ENCODE measurements at regions of chr3 and their contacts with region 1.

Region 1: GRCh38 chr3:119463171-119464169 is at the start of gene TMEM39A:
- DNase-seq: peak; percentile 97 to 100 (median 99)

Region 2: GRCh38 chr3:118973050-118973449 is 490.4 kb before region 1 on chr3:
- intact Hi-C with region 1: no loop called
- DNase-seq: peak in 41 of 42 donors; percentile 43 to 87 (median 69)

Region 3: DNA sequence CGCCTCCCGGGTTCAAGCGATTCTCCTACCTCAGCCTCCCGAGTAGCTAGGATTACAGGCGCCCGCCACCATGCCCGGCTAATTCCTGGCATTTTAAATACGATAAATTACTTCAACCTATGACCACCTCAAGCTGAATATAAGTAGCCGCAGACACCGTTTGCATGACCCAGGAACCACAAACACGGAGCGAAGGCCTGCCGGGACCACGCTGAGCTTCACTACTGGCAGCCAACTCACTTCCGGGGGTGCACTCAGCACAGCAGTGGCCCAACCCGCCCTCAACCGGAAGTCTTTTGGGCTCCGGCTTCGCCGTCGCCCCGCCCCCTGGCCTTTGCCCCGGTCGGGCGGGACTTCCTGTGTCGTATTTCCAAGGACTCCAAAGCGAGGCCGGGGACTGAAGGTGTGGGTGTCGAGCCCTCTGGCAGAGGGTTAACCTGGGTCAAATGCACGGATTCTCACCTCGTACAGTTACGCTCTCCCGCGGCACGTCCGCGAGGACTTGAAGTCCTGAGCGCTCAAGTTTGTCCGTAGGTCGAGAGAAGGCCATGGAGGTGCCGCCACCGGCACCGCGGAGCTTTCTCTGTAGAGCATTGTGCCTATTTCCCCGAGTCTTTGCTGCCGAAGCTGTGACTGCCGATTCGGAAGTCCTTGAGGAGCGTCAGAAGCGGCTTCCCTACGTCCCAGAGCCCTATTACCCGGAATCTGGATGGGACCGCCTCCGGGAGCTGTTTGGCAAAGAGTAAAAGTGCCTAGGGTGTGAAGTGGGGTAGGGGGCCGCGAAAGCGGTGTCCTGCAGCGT is 34.9 kb after region 1 on chr3 and contains the start of gene TIMMDC1:
- intact Hi-C with region 1: loop called (anchors 2 kb)
- DNase-seq: peak; percentile 96 to 100 (median 99)

Region 4: DNA sequence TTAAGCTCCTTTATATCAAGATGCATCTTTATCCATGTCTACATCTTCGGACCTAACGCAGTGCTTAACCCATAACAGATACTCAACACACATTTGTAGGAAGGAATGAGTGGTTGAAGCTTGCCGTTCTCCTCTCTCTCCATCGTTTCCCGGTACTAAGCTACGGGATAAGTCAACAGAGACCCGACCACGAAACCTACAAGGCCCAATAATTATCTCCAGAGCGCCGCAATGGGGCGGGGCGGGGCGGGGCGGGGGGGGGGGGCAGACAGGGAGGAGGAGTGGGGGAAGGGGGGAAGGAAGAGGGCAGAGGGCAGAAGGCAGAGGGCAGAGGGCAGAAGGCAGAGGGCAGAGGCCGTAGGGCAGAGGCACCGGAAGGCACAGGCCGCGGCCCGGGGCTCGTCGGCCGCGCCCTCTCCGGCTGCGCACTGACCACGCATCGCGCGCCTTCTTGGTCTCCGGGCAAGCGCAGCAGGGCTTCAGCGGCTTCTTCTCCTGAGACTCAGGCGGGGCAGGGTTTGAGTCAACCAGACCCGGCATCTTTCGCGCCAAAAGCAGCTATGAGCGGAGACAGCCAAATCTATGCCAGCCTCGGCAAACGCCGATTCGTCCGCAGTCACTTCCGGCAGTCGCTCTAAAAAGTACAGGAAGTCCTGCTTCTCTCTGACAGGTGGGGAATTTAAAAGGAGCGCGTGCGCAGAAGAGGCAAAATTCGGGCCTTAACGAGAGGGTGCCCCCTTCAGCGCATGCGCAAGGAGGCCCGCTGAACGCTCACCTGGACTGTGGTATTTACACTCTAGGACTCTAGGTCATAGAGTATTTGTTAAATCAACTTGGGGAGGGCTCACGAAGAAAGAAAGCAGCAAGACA is 213.5 kb after region 1 on chr3 and contains the start of gene COX17:
- intact Hi-C with region 1: loop called (anchors 10 kb)
- DNase-seq: peak; percentile 82 to 97 (median 92)

Region 5: GRCh38 chr3:120095226-120095978 is 631.9 kb after region 1 on chr3:
- intact Hi-C with region 1: loop called (anchors 10 kb)
- DNase-seq: peak; percentile 54 to 88 (median 75)

Measured in head of caudate nucleus (tissue), 42 donors.